ENCODE measurements at regions of chr12 and their contacts with region 1.

Region 1: GRCh38 chr12:51246254-51246853 is 7.7 kb downstream of the DAZAP2 start:
- DNase-seq: peak; percentile 25 to 88 (median 57)
- ATAC-seq: peak; percentile 86
- H3K4me3 ChIP-seq: peak overlapping the region; percentile 5; the same call in 1 of the 2 replicates
- H3K27ac ChIP-seq: peak overlapping the region; percentile 76
- H3K4me1 ChIP-seq: peaks cover 0 to 28% of the 10 kb centered on the region in 2 experiments; a peak in 3 of 5 replicates
- H3K27me3 ChIP-seq: no peaks in the 10 kb centered on the region
- CTCF ChIP-seq: peak; percentile 40 to 52 (median 44); a peak in 5 of 6 replicates
- EP300 ChIP-seq: peak; percentile 90
- POLR2A ChIP-seq: peak; percentile 72
- RAD21 ChIP-seq: peak; percentile 55 to 71

Region 2: GRCh38 chr12:51047655-51048540 is 198.5 kb before region 1 on chr12 and contains the start of gene LETMD1:
- CTCF ChIA-PET with region 1: interaction called, 4 read pairs
- POLR2A ChIA-PET with region 1: no interaction called
- in situ Hi-C with region 1: no loop called
- intact Hi-C with region 1: loop called (anchors 2 kb)
- DNase-seq: peak; percentile 85 to 98 (median 90)
- ATAC-seq: peak; percentile 98
- H3K4me3 ChIP-seq: peak within 1 kb of the TSS; percentile 59
- H3K27ac ChIP-seq: peak within 1 kb of the TSS; percentile 96
- H3K4me1 ChIP-seq: peaks cover 4 to 10% of the 10 kb centered on the region in 2 experiments; a peak in 4 of 5 replicates
- H3K27me3 ChIP-seq: no peaks in the 10 kb centered on the region
- CTCF ChIP-seq: peak; percentile 90 to 95 (median 93)
- EP300 ChIP-seq: no peak
- POLR2A ChIP-seq: peak; percentile 96
- RAD21 ChIP-seq: peak; percentile 81 to 84
- polyA plus RNA-seq, gene LETMD1: 58.7 to 75.4 TPM

Region 3: DNA sequence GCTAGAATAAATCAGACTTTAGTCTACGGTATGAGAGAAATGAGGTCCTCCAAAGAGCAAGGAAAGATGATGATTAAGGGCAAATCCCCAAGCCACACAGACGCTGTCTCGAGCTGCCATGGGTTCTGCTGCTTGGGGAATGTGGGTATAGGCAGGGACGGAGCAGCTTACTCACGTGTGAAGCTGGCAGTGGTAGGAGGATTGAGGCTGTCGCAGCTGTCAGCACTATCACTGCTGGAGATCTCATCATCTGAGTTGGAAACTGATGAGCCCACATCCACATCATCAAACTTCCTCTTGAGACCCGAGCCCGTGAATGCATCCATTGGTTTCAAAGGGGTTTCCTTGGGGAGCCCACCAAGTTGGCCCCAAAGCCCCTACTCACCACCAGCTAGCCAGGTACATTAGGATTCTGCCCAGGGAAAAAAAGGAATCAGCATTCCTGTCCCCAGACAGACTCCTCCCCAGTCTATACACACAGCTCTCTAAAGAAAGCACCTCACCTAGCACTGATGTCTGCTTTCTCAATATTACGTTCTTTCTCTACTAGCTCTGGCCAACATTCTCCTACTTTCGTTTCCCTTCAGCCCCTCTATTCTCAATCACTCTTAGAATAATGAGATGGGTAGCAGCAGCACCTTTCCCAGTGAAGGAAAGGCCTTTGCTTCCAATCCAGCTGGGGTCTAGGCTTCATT is 170.0 kb before region 1 on chr12:
- CTCF ChIA-PET with region 1: no interaction called
- POLR2A ChIA-PET with region 1: no interaction called
- in situ Hi-C with region 1: no loop called
- intact Hi-C with region 1: no loop called
- DNase-seq: no peak
- ATAC-seq: no peak
- H3K4me3 ChIP-seq: no peak overlapping the region
- H3K27ac ChIP-seq: no peak overlapping the region
- H3K4me1 ChIP-seq: peaks cover 1 to 5% of the 10 kb centered on the region in 2 experiments; a peak in 1 of 5 replicates
- H3K27me3 ChIP-seq: no peaks in the 10 kb centered on the region
- CTCF ChIP-seq: no peak
- EP300 ChIP-seq: no peak
- POLR2A ChIP-seq: no peak
- RAD21 ChIP-seq: no peak

Region 4: DNA sequence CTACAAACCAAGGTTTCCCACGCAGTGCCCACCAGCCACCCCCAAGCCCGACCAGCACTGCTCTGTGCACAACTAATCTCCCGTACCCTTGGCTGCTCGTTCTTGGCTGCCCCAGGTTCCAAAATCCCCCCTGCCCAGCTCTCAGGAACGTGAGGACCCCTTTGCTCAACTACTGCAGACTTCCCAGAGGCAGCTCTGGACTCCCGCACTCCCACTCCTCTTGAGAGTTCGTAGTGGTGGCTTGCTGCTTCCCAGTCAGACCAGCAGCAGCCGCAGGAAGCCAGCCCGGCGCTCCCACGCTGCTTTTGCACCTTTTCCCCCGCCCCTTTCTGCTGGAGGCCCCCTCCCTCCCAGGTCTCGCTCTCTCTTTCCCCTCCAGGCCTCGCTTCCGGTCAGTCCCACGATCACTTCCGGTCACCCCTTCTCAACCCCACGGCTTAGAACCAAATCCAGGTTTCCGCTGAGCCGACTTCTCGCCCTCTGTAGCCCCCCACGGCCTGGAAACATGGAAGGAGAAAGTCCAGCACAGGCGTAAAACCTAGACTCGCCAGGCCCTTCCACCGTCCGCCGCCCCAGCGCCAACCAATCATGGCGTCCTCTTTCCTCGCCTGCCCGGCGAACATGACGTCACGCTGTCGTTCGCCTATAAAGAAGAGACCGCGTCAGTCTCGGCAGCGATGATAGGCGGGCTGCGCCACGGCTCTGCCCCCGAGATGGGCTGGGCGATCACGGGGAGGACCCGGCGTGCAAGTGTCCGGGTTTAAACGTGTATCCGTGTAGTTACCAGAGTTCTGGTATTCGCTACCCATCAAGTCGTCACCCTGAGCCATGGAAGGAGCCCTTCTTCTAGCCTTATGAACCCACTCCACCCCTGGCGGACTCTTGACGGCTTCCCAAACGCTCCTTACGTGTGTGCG is 73.6 kb before region 1 on chr12 and contains the start of gene TFCP2:
- CTCF ChIA-PET with region 1: no interaction called
- POLR2A ChIA-PET with region 1: no interaction called
- in situ Hi-C with region 1: no loop called
- intact Hi-C with region 1: loop called (anchors 2 kb)
- DNase-seq: peak; percentile 95 to 99 (median 96)
- ATAC-seq: peak; percentile 94
- H3K4me3 ChIP-seq: peak within 1 kb of the TSS; percentile 58
- H3K27ac ChIP-seq: peak within 1 kb of the TSS; percentile 99
- H3K4me1 ChIP-seq: peaks cover 3 to 9% of the 10 kb centered on the region in 2 experiments; a peak in 3 of 5 replicates
- H3K27me3 ChIP-seq: no peaks in the 10 kb centered on the region
- CTCF ChIP-seq: no peak
- EP300 ChIP-seq: 0 out of 2 replicates have a peak, but pooled peaks have one; percentile 3
- POLR2A ChIP-seq: peak; percentile 90
- RAD21 ChIP-seq: peak in 1 of 2 experiments; percentile 13; a peak in 2 of 4 replicates
- polyA plus RNA-seq, gene TFCP2: 8.0 to 17.8 TPM